ENCODE measurements at regions of chr10 and their contacts with region 1.

Region 1: GRCh38 chr10:35447693-35448407 is 111.5 kb downstream of the CCNY start:
- DNase-seq: peak; percentile 77 to 79
- H3K4me3 ChIP-seq: peak overlapping the region; percentile 52; the same call in 1 of the 2 replicates
- H3K27ac ChIP-seq: peak overlapping the region; percentile 95
- H3K4me1 ChIP-seq: peaks cover 28% of the 10 kb centered on the region
- H3K27me3 ChIP-seq: no peaks in the 10 kb centered on the region
- CTCF ChIP-seq: no peak

Region 2: DNA sequence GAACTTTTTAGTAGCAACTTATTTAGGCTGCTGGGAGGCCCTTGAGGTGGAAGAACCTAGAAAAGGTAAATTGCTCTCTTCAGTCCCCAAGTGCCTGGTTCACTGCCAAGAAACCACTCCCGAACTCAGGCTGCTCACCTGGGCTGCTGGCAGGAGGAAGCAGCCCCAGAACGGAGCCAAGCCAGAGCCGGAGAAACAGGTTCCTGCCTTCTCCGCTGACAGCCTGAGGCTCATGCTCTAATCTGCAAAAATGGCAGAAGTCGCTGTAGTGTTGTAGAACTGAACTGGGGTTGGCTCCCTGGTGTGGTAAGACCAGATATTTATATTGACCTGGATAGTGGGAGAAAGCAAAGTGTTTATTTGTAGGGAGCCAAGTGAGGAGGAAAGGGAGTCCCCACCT is 493.7 kb before region 1 on chr10:
- CTCF ChIA-PET with region 1: no interaction called
- POLR2A ChIA-PET with region 1: no interaction called
- intact Hi-C with region 1: no loop called
- DNase-seq: peak; percentile 90 to 91
- H3K4me3 ChIP-seq: no peak overlapping the region
- H3K27ac ChIP-seq: no peak overlapping the region
- H3K4me1 ChIP-seq: peaks cover 27% of the 10 kb centered on the region
- H3K27me3 ChIP-seq: no peaks in the 10 kb centered on the region
- CTCF ChIP-seq: no peak

Region 3: GRCh38 chr10:35372329-35372728 is 75.5 kb before region 1 on chr10:
- CTCF ChIA-PET with region 1: no interaction called
- POLR2A ChIA-PET with region 1: no interaction called
- intact Hi-C with region 1: loop called (anchors 5 kb)
- DNase-seq: peak in 1 of 2 experiments; percentile 71
- H3K4me3 ChIP-seq: no peak overlapping the region
- H3K27ac ChIP-seq: no peak overlapping the region
- H3K4me1 ChIP-seq: no peaks in the 10 kb centered on the region
- H3K27me3 ChIP-seq: no peaks in the 10 kb centered on the region
- CTCF ChIP-seq: no peak

Region 4: DNA sequence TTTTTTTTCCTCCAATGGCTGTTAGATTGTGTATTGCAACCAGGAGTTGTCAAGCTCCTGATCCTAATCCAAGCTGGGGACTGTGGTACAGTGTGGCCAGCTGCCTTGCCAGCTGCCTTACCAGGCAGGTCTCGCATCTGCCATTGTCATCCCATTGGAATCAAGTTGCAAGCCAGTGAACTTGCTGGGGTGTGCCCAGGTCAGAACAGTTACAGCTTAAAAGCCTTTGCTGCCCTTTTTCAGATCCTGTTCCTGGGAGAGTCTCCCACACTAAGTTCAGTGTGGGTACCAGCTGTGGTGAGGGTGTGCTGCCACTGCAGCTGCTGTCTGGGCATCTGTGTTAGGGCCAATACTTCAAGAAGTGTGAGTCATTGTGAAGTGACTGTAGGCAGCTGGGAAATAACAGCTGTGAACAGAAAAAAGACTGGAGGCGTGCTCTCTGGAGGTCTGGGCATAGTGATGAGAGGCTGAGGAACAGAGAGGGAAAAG is 38.7 kb before region 1 on chr10:
- CTCF ChIA-PET with region 1: no interaction called
- POLR2A ChIA-PET with region 1: interaction called, 5 read pairs
- intact Hi-C with region 1: loop called (anchors 2 kb)
- DNase-seq: peak in 1 of 2 experiments; percentile 30
- H3K4me3 ChIP-seq: no peak overlapping the region
- H3K27ac ChIP-seq: no peak overlapping the region
- H3K4me1 ChIP-seq: peaks cover 26% of the 10 kb centered on the region
- H3K27me3 ChIP-seq: no peaks in the 10 kb centered on the region
- CTCF ChIP-seq: no peak

Region 5: DNA sequence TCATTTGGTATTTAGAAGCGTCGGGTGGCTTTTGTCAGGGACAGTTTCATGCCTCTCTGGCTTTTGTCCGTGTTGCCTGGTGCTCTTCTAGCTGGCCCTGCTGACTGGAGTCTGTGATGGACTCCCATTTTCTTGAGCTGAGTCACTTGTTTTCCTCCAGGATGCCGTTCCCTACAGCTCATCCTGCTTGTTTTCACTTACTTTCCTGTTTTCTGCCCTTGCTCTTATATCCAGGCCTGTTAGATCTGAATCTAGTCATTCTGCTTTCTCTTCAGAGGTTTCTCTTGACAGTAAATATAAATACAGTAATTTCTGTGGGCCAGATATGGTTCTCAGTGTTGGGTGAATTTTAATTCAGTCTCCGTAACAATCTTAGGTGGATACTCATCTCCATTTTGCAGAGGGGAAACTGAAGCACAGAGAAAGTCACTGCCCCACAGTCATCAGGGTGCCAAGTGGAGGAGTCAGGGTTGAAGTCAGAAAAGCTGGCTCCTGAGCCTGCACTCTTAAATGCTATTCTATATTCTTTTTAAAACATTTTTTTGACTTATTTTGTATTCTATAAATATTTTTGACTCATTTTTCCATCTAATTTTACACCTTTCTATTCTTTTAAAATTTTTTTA is 26.2 kb before region 1 on chr10:
- CTCF ChIA-PET with region 1: no interaction called
- POLR2A ChIA-PET with region 1: interaction called, 6 read pairs
- intact Hi-C with region 1: loop called (anchors 2 kb)
- DNase-seq: peak; percentile 53 to 78
- H3K4me3 ChIP-seq: no peak overlapping the region; the same call in 1 of the 2 replicates
- H3K27ac ChIP-seq: peak overlapping the region; percentile 80
- H3K4me1 ChIP-seq: peaks cover 46% of the 10 kb centered on the region
- H3K27me3 ChIP-seq: no peaks in the 10 kb centered on the region
- CTCF ChIP-seq: no peak

Region 6: GRCh38 chr10:35493196-35494118 is 45.6 kb after region 1 on chr10:
- CTCF ChIA-PET with region 1: interaction called, 3 read pairs
- POLR2A ChIA-PET with region 1: no interaction called
- intact Hi-C with region 1: loop called (anchors 2 kb)
- DNase-seq: peak; percentile 45 to 49
- H3K4me3 ChIP-seq: no peak overlapping the region
- H3K27ac ChIP-seq: no peak overlapping the region
- H3K4me1 ChIP-seq: peaks cover 29% of the 10 kb centered on the region
- H3K27me3 ChIP-seq: no peaks in the 10 kb centered on the region
- CTCF ChIP-seq: no peak

Region 7: DNA sequence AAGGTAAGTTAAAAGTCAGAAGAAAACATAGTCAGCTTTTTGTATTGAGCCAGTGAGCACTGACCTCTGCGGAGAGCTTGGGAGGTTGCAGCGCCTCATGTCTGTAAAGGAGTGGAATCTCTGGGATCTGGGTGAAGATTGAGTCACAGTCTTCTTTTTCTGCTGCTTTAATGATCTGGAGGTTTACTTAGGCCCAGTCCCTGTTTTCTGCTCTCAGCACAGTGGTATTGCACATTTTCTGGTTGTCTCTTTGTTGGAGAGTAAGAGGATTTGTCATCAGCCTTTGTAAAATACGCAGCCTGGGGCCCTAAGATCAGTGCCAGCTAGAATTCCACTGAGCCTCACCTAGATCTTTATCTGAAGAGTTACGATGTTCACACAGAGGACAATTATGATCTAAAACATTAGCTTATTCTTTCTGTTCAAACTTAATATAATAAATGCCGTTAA is 99.0 kb after region 1 on chr10:
- CTCF ChIA-PET with region 1: no interaction called
- POLR2A ChIA-PET with region 1: no interaction called
- intact Hi-C with region 1: loop called (anchors 2 kb)
- DNase-seq: peak; percentile 61 to 78
- H3K4me3 ChIP-seq: no peak overlapping the region
- H3K27ac ChIP-seq: peak overlapping the region; percentile 32; the same call in 1 of the 2 replicates
- H3K4me1 ChIP-seq: peaks cover 16% of the 10 kb centered on the region
- H3K27me3 ChIP-seq: no peaks in the 10 kb centered on the region
- CTCF ChIP-seq: no peak